Heart left ventricle (tissue), 16 donors: ENCODE measurements at regions of chr1 and their contacts with region 1.

Region 1: DNA sequence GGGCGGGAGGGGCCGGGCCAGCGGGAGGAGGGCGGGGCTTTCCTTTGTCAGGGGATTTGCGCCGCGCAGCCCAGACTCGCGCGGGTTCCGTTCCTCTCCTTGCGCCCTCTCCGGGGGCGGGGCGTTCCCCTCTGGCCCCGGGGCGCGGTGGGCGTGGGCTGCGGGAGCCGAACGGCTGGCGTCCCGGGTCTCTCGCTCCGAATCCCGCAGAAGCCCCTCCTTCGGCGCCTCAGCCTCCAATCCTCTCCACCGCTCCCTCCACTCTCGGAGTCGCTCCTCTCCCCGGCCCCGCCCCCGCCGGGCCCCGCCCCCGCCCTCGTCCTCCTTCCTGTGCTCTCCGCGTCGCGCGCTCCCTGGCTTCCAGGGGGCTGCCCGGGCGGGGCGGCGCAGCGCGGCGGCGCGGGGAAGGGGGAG is 82.8 kb upstream of the BMP8A start:
- DNase-seq: peak; percentile 96 to 98 (median 97)
- ATAC-seq: peak; percentile 90 to 95 (median 93)
- H3K4me3 ChIP-seq: peak overlapping the region; percentile 64 to 97 (median 81)
- H3K27ac ChIP-seq: peak overlapping the region; percentile 78 to 97 (median 92)
- H3K4me1 ChIP-seq: peaks cover 10 to 86% (median 74%) of the 10 kb centered on the region in 12 donors
- H3K27me3 ChIP-seq: no peaks in the 10 kb centered on the region
- CTCF ChIP-seq: peak in 2 of 12 donors; percentile 17 to 27
- POLR2A ChIP-seq: peak in 1 of 2 donors; percentile 17

Region 2: GRCh38 chr1:39204441-39205081 is 204.1 kb before region 1 on chr1 and contains the start of gene MACF1:
- intact Hi-C with region 1: loop called in 1 of 10 experiments (anchors 10 kb)
- DNase-seq: peak; percentile 71 to 82 (median 78)
- ATAC-seq: peak; percentile 90 to 93 (median 92)
- H3K4me3 ChIP-seq: peak within 1 kb of the TSS; percentile 24 to 72 (median 52)
- H3K27ac ChIP-seq: peak within 1 kb of the TSS; percentile 83 to 98 (median 93)
- H3K4me1 ChIP-seq: peaks cover 6 to 53% (median 28%) of the 10 kb centered on the region in 12 donors
- H3K27me3 ChIP-seq: no peaks in the 10 kb centered on the region
- CTCF ChIP-seq: peak; percentile 13 to 69 (median 44)
- POLR2A ChIP-seq: peak in 1 of 2 donors; percentile 23
- total RNA-seq, gene MACF1: 183 to 436 (median 290) TPM

Region 3: DNA sequence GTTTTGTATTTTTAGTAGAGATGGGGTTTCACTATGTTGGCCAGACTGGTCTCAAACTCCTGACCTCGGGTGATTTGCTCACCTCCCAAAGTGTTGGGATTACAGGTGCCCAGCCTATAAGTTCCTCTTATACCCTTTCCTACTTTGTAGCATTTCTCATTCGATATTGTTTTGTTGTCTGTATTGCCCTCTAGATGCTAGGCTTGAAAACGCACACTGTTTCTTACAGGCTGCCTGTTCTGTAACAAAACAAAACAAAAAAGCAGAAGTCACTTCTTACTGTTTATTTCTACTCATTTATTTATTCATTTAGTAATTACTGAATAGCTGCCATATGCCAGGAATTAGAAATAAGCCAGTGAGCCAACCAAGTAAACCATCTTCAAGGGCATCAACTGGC is 54.1 kb before region 1 on chr1:
- intact Hi-C with region 1: loop called in 1 of 10 experiments (anchors 5 kb)
- DNase-seq: no peak
- ATAC-seq: no peak
- H3K4me3 ChIP-seq: no peak overlapping the region
- H3K27ac ChIP-seq: no peak overlapping the region
- H3K4me1 ChIP-seq: peaks cover 0 to 17% (median 9%) of the 10 kb centered on the region in 12 donors
- H3K27me3 ChIP-seq: no peaks in the 10 kb centered on the region
- CTCF ChIP-seq: peak in 1 of 12 donors; percentile 8
- POLR2A ChIP-seq: no peak

Region 4: GRCh38 chr1:39360731-39361130 is 47.9 kb before region 1 on chr1:
- intact Hi-C with region 1: loop called in 2 of 10 experiments (anchors 5 to 10 kb)
- DNase-seq: no peak
- ATAC-seq: no peak
- H3K4me3 ChIP-seq: no peak overlapping the region
- H3K27ac ChIP-seq: peak overlapping the region in 1 of 12 donors; percentile 36
- H3K4me1 ChIP-seq: peaks cover 0 to 18% (median 9%) of the 10 kb centered on the region in 12 donors
- H3K27me3 ChIP-seq: no peaks in the 10 kb centered on the region
- CTCF ChIP-seq: no peak
- POLR2A ChIP-seq: no peak

Region 5: DNA sequence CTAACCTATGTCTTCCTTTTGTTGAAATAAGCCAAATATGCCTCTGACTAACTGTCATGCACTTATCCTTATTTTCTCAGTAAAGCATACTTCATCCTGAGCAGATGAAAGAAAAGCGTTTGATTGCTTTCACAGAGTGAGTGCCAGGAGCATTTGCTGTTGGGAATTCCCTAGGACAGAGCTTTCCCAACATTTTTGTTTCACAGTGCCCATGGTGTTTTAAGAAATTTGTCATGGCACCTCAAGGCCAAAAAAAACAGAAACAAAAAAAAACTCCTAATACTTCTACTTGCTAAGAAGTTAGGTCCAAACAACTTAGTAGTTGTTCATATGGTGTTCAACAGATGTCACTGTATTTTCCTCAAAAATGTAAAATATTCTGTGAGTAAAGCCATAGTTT is 38.0 kb before region 1 on chr1:
- intact Hi-C with region 1: loop called in 2 of 10 experiments (anchors 5 to 10 kb)
- DNase-seq: no peak
- ATAC-seq: no peak
- H3K4me3 ChIP-seq: no peak overlapping the region
- H3K27ac ChIP-seq: peak overlapping the region in 1 of 12 donors; percentile 63
- H3K4me1 ChIP-seq: peaks cover 0 to 10% (median 1%) of the 10 kb centered on the region in 12 donors
- H3K27me3 ChIP-seq: no peaks in the 10 kb centered on the region
- CTCF ChIP-seq: no peak
- POLR2A ChIP-seq: no peak

Region 6: DNA sequence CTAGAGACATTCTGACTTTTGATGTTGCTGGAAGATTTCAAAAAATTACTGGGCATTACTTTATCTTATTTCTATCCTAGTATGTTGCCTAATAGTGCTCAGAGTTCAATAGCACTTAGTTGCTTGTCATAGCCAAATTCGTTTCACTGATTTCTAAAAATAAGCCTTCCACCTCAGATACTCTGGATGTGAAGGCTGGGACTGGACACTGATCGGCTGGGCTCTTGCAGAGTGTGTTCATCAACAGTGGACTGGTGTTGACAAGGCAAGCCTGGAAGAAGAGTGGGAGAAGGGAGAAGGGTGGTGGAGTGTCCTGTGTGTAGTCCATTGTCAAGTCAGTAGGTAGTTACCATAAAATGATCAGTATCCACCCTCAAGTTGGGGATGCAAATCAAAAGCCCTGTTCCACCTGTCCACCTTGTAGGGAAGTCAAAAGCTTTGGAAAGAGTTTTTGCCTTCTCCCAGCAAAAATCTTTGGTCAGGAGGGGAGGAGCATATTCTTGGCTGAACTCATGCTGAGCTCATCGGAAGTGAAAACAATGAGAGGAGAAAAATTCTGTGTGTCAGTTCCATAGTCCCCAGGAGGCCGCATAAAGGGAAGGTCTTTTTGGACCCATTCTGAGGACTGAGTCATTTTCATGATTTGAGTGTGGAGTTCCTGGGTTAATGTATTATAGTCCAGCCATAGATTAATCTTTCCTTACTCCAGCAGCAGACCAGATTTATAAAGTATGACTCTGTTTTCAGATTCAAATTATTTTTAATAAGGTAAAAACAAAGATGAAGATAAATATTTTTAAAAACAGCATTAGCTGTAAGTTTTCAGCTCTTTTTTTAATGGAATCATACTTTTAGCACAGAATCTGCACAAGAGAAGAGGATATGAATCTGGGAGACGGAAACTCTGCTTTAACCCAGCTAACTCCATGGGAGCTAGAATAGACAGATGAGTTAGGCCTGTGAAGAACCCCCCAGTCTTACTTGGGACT is 16.7 kb before region 1 on chr1:
- intact Hi-C with region 1: loop called in 4 of 10 experiments (anchors 2 kb)
- DNase-seq: peak in 4 of 5 donors; percentile 45 to 68 (median 58)
- ATAC-seq: peak; percentile 81 to 90 (median 84)
- H3K4me3 ChIP-seq: peak overlapping the region in 1 of 12 donors; percentile 14
- H3K27ac ChIP-seq: peak overlapping the region; percentile 47 to 85 (median 74)
- H3K4me1 ChIP-seq: peaks cover 7 to 75% (median 65%) of the 10 kb centered on the region in 12 donors
- H3K27me3 ChIP-seq: no peaks in the 10 kb centered on the region
- CTCF ChIP-seq: no peak
- POLR2A ChIP-seq: no peak

Region 7: GRCh38 chr1:39434797-39435395 is 26.2 kb after region 1 on chr1:
- intact Hi-C with region 1: no loop called
- DNase-seq: no peak
- ATAC-seq: peak; percentile 84 to 98 (median 91)
- H3K4me3 ChIP-seq: no peak overlapping the region
- H3K27ac ChIP-seq: peak overlapping the region in 5 of 12 donors; percentile 4 to 32 (median 22)
- H3K4me1 ChIP-seq: peaks cover 0 to 14% (median 6%) of the 10 kb centered on the region in 12 donors
- H3K27me3 ChIP-seq: no peaks in the 10 kb centered on the region
- CTCF ChIP-seq: no peak
- POLR2A ChIP-seq: no peak

Region 8: DNA sequence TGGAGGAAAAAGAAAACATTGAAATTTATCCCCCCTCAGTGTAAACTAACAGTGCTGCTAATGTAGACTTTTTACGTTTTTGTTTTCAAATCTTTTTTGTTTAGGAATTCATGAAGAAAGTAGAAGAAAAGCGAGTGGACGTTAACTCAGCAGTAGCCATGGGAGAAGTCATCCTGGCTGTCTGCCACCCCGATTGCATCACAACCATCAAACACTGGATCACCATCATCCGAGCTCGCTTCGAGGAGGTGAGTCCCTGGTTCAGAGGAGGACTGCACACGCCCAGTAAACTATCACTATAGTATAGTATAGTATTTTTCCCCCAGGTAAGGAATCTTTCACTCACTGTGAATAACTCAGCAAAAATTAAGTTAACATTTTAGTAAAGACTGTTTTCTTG is 45.0 kb after region 1 on chr1:
- intact Hi-C with region 1: no loop called
- DNase-seq: peak in 3 of 5 donors; percentile 53 to 60 (median 55)
- ATAC-seq: peak in 2 of 4 donors; percentile 38 to 57
- H3K4me3 ChIP-seq: no peak overlapping the region
- H3K27ac ChIP-seq: no peak overlapping the region
- H3K4me1 ChIP-seq: peaks cover 0 to 9% (median 0%) of the 10 kb centered on the region in 12 donors
- H3K27me3 ChIP-seq: no peaks in the 10 kb centered on the region
- CTCF ChIP-seq: no peak
- POLR2A ChIP-seq: no peak